Endothelial cell of umbilical vein (primary cell): ENCODE measurements at regions of chr11 and their contacts with region 1.

Region 1: GRCh38 chr11:47565340-47566148 is at the start of gene PTPMT1:
- DNase-seq: peak; percentile 63
- H3K4me3 ChIP-seq: peak within 1 kb of the TSS; percentile 38 to 87 (median 69)
- H3K27ac ChIP-seq: peak within 1 kb of the TSS; percentile 56
- H3K4me1 ChIP-seq: peaks cover 9% of the 10 kb centered on the region
- H3K27me3 ChIP-seq: no peaks in the 10 kb centered on the region
- CTCF ChIP-seq: no peak
- POLR2A ChIP-seq: peak; percentile 85
- total RNA-seq, gene PTPMT1: 44.6 and 46.6 TPM in 2 replicates

Region 2: GRCh38 chr11:47466701-47467250 is 98.8 kb before region 1 on chr11:
- CTCF ChIA-PET with region 1: interaction called, 4 read pairs
- POLR2A ChIA-PET with region 1: interaction called, 10 read pairs
- dilution Hi-C with region 1: no loop called
- intact Hi-C with region 1: no loop called
- DNase-seq: peak; percentile 80
- H3K4me3 ChIP-seq: peak overlapping the region in 1 of 3 experiments; percentile 10
- H3K27ac ChIP-seq: peak overlapping the region; percentile 36
- H3K4me1 ChIP-seq: peaks cover 37% of the 10 kb centered on the region
- H3K27me3 ChIP-seq: no peaks in the 10 kb centered on the region
- CTCF ChIP-seq: no peak
- POLR2A ChIP-seq: no peak

Region 3: DNA sequence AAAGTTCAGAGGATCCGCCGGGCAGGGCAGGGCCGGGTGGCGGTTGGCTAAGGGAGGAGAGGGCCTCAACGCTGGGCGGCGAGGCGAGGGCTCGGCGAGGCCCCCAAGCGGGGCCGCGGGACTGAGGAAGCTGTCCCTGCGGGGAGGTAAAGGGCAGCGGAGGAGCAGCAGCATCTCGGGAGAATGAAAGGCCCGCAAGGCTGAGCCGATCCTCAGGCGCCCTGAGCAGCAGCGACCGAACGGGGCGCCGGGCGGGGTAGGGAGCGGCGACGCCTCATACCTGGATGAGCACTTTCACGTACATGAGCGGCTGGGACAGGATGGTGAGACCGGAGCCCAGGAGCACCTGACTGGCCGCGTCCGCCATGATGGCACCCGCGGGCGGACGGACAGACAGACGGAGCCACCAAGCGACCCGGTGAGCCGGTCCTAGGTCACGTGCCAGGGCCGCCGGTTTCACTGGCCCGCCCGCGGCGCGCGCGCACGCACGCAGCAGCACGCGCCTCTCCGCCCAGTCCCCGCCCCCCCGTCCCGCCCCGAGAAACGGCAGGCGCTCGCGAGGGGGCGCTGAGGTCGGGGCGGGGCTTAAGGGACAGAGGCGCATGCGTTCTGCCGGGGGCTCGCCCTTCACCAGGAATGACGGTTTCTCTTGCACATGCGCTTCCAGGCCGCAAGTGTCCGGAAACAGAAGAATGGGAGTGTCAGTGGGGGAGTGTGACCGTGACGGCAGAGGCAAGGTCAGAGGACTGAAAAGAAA is 76.7 kb after region 1 on chr11 and contains the start of gene MTCH2:
- CTCF ChIA-PET with region 1: no interaction called
- POLR2A ChIA-PET with region 1: no interaction called
- dilution Hi-C with region 1: no loop called
- intact Hi-C with region 1: no loop called
- DNase-seq: peak; percentile 98
- H3K4me3 ChIP-seq: peak within 1 kb of the TSS; percentile 70 to 95 (median 93)
- H3K27ac ChIP-seq: peak within 1 kb of the TSS; percentile 75
- H3K4me1 ChIP-seq: peaks cover 11% of the 10 kb centered on the region
- H3K27me3 ChIP-seq: no peaks in the 10 kb centered on the region
- CTCF ChIP-seq: peak in 1 of 2 donors; percentile 11
- POLR2A ChIP-seq: peak; percentile 93
- total RNA-seq, gene MTCH2: 134 and 138 TPM in 2 replicates

Region 4: DNA sequence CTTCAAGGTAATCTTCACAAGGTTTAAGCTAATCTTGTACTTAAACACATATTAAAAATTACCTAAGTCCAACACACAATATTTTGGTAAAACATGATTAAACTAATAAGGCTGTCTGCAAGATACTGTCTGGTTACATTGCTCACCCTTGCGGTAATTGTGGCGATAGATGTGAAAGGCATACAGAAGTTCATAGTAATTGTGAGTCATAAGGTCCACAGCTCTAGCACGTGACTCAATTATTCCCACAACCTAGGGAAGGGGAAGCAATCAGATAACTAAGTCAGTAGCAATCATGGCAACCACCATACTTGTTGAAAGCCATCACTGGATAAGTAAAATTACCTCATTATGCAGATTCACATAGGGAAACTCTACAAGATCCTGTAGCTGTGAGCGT is 232.1 kb after region 1 on chr11:
- CTCF ChIA-PET with region 1: no interaction called
- POLR2A ChIA-PET with region 1: interaction called, 16 read pairs
- dilution Hi-C with region 1: no loop called
- intact Hi-C with region 1: no loop called
- DNase-seq: peak; percentile 41
- H3K4me3 ChIP-seq: no peak overlapping the region
- H3K27ac ChIP-seq: no peak overlapping the region
- H3K4me1 ChIP-seq: no peaks in the 10 kb centered on the region
- H3K27me3 ChIP-seq: no peaks in the 10 kb centered on the region
- CTCF ChIP-seq: no peak
- POLR2A ChIP-seq: no peak

Region 5: DNA sequence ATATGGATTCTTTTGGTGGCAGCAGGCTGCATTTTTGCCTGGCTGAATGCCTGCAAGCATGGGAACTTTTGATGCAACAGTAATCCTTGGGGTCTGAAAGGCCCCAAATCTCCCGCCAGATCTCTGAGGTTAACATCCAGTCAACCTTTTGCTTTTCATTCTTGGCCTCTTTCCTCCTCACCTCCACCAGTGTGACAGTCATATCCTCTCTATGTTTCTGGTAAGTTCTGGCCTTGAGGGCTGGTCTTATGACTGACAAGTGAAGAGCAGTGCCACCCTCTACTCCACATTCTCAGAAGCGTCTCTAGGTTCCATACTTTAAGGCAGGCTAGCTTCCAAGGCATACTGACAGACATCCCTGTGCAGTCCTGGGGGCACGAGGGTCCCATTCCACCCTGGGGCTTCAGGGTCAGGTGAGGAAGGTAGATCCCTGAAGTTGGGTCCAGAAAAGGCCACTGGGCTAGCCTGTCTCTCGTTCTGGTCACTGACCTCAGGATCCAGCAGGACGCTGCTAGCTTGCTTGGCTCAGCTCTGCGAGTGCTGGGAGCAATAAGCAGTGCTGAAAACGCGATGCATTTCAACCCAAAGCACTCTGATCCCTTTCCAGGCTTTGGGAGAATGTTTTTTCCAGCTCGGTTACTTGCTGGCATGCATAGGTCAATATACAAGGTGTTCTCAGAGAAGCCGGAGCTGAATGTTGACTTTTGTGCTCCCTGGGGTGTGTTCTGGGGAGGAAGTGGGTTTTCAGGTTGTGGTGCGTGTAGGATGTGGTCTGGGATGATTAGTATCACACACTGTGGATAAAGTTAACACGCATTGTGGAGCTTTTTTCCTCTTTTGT is 490.0 kb after region 1 on chr11:
- CTCF ChIA-PET with region 1: no interaction called
- POLR2A ChIA-PET with region 1: no interaction called
- dilution Hi-C with region 1: no loop called
- intact Hi-C with region 1: no loop called
- DNase-seq: no peak
- H3K4me3 ChIP-seq: no peak overlapping the region
- H3K27ac ChIP-seq: no peak overlapping the region
- H3K4me1 ChIP-seq: no peaks in the 10 kb centered on the region
- H3K27me3 ChIP-seq: no peaks in the 10 kb centered on the region
- CTCF ChIP-seq: no peak
- POLR2A ChIP-seq: no peak